Activated CD8-positive, alpha-beta T cell treated with anti-CD3 and anti-CD28 coated beads, Interleukin-2, amount 10 ng/mL, durations not matched to agents 7 days and 5 days (primary cell): ENCODE measurements at regions of chr12 and their contacts with region 1.

Region 1: GRCh38 chr12:14769969-14770495 is 33.2 kb downstream of the WBP11 start:
- DNase-seq: peak; percentile 91
- ATAC-seq: peak; percentile 52
- H3K4me3 Mint-ChIP-seq: peak overlapping the region; percentile 99
- H3K27ac Mint-ChIP-seq: peak overlapping the region; percentile 99
- H3K4me1 Mint-ChIP-seq: peaks cover 48% of the 10 kb centered on the region
- H3K27me3 Mint-ChIP-seq: no peaks in the 10 kb centered on the region

Region 2: GRCh38 chr12:14384783-14385638 is 385.0 kb before region 1 on chr12:
- CTCF ChIA-PET with region 1: no interaction called
- POLR2A ChIA-PET with region 1: interaction called, 11 read pairs
- DNase-seq: peak; percentile 88
- ATAC-seq: peak; percentile 97
- H3K4me3 Mint-ChIP-seq: peak overlapping the region; percentile 86
- H3K27ac Mint-ChIP-seq: peak overlapping the region; percentile 91
- H3K4me1 Mint-ChIP-seq: peaks cover 59% of the 10 kb centered on the region
- H3K27me3 Mint-ChIP-seq: no peaks in the 10 kb centered on the region

Region 3: GRCh38 chr12:14723763-14724162 is 46.3 kb before region 1 on chr12:
- CTCF ChIA-PET with region 1: interaction called, 16 read pairs
- POLR2A ChIA-PET with region 1: interaction called, 13 read pairs
- DNase-seq: peak; percentile 68
- ATAC-seq: peak; percentile 76
- H3K4me3 Mint-ChIP-seq: no peak overlapping the region
- H3K27ac Mint-ChIP-seq: no peak overlapping the region
- H3K4me1 Mint-ChIP-seq: no peaks in the 10 kb centered on the region
- H3K27me3 Mint-ChIP-seq: peaks cover 3% of the 10 kb centered on the region

Region 4: DNA sequence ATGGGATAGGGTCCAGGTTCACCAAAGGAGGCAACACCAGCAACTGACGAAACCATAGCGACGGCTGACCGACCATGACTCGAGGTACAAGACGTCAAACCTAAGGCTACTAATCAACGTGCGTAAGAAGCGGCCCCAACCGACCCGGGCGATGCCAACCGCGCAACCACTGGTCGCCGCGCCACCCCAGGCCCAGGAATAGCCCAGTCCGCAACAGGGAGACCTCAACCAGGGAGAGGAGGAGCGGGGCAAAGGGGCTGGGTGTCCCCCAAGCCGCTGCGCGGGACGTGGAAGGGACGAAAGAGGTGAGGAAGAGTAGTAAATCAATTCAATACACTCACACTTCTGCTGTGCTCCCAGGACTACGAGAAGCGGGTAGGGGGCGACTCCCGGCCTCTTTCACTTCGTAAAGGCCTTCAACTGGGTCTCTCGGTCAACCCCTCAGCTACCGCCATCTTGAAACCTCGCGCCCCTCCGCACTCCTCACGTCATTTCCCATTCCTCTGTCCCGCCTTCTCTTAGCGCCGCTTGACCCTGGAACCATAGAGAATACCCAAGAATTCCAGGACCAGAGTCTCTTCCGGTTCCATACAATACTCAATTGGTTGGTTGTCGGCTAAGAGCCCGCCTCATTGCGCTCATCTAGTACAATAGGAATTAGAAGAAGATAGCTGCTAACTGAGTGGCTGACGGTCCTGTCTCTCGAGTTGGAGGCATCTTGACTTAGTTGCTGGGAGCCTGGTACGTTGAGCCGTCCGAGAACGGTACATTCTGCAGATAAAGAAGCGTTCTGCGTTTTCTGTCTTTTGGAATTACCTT is 33.2 kb after region 1 on chr12 and contains the starts of genes C12orf60 and WBP11:
- CTCF ChIA-PET with region 1: interaction called, 36 read pairs
- POLR2A ChIA-PET with region 1: interaction called, 71 read pairs
- DNase-seq: peak; percentile 93
- ATAC-seq: peak; percentile 99
- H3K4me3 Mint-ChIP-seq: no peak within 1 kb of the TSS
- H3K27ac Mint-ChIP-seq: no peak within 1 kb of the TSS
- H3K4me1 Mint-ChIP-seq: peaks cover 33% of the 10 kb centered on the region
- H3K27me3 Mint-ChIP-seq: no peaks in the 10 kb centered on the region
- total RNA-seq, gene C12orf60: 1.4 to 1.5 TPM
- total RNA-seq, gene WBP11: 98.2 to 98.6 TPM

Region 5: GRCh38 chr12:14905269-14906004 is 135.4 kb after region 1 on chr12:
- CTCF ChIA-PET with region 1: no interaction called
- POLR2A ChIA-PET with region 1: no interaction called
- DNase-seq: no peak
- ATAC-seq: no peak
- H3K4me3 Mint-ChIP-seq: no peak overlapping the region
- H3K27ac Mint-ChIP-seq: no peak overlapping the region
- H3K4me1 Mint-ChIP-seq: peaks cover 16% of the 10 kb centered on the region
- H3K27me3 Mint-ChIP-seq: no peaks in the 10 kb centered on the region

Region 6: GRCh38 chr12:14960548-14961465 is 190.8 kb after region 1 on chr12:
- CTCF ChIA-PET with region 1: interaction called, 7 read pairs
- POLR2A ChIA-PET with region 1: interaction called, 175 read pairs
- DNase-seq: peak; percentile 62
- ATAC-seq: peak; percentile 48
- H3K4me3 Mint-ChIP-seq: peak overlapping the region; percentile 98
- H3K27ac Mint-ChIP-seq: peak overlapping the region; percentile 95
- H3K4me1 Mint-ChIP-seq: peaks cover 46% of the 10 kb centered on the region
- H3K27me3 Mint-ChIP-seq: no peaks in the 10 kb centered on the region

Region 7: DNA sequence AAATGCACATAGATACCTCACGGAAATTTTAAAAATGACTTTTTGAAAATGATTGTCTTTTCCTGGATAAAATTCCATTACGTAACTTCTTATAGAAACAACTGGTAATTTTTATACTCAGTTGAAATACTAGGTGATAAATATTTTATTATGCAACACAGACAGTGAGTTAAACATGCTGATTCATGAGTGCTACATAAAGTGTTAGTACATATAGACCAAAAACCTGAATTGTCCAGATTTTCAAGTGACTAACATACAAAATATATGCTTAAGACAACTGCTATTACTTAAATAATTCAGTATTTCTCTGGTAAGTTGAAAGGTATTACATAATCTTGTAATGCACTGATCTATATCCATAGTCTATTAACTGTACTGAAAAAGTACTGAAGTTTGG is 564.2 kb after region 1 on chr12:
- CTCF ChIA-PET with region 1: no interaction called
- POLR2A ChIA-PET with region 1: no interaction called
- DNase-seq: no peak
- ATAC-seq: no peak
- H3K4me3 Mint-ChIP-seq: no peak overlapping the region
- H3K27ac Mint-ChIP-seq: no peak overlapping the region
- H3K4me1 Mint-ChIP-seq: no peaks in the 10 kb centered on the region
- H3K27me3 Mint-ChIP-seq: peaks cover 12% of the 10 kb centered on the region